Caco-2 (cell line): ENCODE measurements at regions of chr14 and their contacts with region 1.

Region 1: DNA sequence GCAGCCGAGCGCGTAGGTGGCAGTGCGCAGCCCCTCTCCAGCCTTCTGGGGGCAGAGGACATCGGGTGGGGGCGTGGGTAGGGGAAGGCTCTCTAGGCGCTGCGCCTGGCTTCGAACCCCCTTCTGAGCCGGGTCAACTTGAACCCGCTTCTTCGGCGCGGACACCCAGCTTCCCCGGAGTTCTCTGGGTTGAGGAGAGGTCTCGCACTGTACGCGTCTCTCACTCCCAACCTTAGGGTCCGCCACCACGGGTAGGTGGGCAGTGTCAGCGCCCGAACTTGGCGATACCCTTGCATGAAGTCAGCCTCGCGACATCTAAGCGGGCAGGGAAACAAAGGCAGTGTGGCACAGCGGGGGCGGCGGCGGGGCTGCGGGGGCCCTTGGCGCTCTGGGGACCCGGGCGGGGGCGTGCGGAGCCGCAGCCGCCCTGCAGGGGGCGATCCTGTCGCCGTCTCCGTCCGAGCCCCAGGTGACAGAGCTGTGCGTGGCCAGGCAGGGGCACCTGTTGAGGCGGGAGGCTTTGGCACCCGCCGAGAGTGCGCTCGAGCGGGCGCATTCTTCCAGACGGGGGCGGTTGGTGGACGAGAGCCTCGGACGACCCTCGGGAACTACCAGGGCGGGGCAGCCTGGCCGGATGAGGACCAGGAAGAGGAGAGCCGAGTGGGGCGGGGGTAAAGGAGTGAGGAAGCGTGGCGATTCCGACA is 1.1 kb downstream of the GALNT16 start:
- DNase-seq: peak; percentile 56 to 77
- H3K4me3 ChIP-seq: peak overlapping the region; percentile 81
- H3K4me3 Mint-ChIP-seq: peak overlapping the region; percentile 83
- H3K27ac Mint-ChIP-seq: peak overlapping the region; percentile 13
- H3K4me1 ChIP-seq: peaks cover 8% of the 10 kb centered on the region
- H3K4me1 Mint-ChIP-seq: peaks cover 11% of the 10 kb centered on the region
- H3K27me3 ChIP-seq: no peaks in the 10 kb centered on the region; the same call in 1 of the 2 replicates
- H3K27me3 Mint-ChIP-seq: peaks cover 3% of the 10 kb centered on the region
- CTCF ChIP-seq: peak; percentile 67 to 92

Region 2: GRCh38 chr14:69181491-69181890 is 79.5 kb before region 1 on chr14:
- CTCF ChIA-PET with region 1: no interaction called
- POLR2A ChIA-PET with region 1: interaction called, 18 read pairs
- intact Hi-C with region 1: no loop called
- DNase-seq: no peak
- H3K4me3 ChIP-seq: no peak overlapping the region
- H3K4me3 Mint-ChIP-seq: no peak overlapping the region
- H3K27ac Mint-ChIP-seq: no peak overlapping the region
- H3K4me1 ChIP-seq: no peaks in the 10 kb centered on the region
- H3K4me1 Mint-ChIP-seq: no peaks in the 10 kb centered on the region
- H3K27me3 ChIP-seq: no peaks in the 10 kb centered on the region
- H3K27me3 Mint-ChIP-seq: no peaks in the 10 kb centered on the region
- CTCF ChIP-seq: no peak

Region 3: DNA sequence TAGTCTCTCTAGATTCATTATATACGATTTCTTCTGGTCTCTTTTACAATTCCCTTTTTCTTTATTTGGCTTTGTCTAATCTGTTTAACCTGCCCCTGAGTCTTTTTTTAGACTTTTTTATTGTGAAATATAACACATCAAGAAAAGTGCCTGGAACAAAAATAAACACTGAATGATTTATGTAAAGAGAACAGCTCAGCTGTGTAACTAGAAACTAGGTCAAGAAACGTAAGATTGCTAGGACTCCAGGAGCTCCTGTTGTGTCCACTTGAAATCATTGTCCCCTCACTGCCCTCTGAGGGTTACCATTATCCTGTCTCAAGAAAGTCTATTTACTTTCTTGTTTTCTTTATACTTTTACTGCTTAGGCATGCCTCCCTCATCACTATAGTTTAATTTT is 46.6 kb before region 1 on chr14:
- CTCF ChIA-PET with region 1: no interaction called
- POLR2A ChIA-PET with region 1: no interaction called
- intact Hi-C with region 1: no loop called
- DNase-seq: no peak
- H3K4me3 ChIP-seq: no peak overlapping the region
- H3K4me3 Mint-ChIP-seq: no peak overlapping the region
- H3K27ac Mint-ChIP-seq: no peak overlapping the region
- H3K4me1 ChIP-seq: no peaks in the 10 kb centered on the region
- H3K4me1 Mint-ChIP-seq: no peaks in the 10 kb centered on the region
- H3K27me3 ChIP-seq: no peaks in the 10 kb centered on the region
- H3K27me3 Mint-ChIP-seq: no peaks in the 10 kb centered on the region
- CTCF ChIP-seq: no peak

Region 4: DNA sequence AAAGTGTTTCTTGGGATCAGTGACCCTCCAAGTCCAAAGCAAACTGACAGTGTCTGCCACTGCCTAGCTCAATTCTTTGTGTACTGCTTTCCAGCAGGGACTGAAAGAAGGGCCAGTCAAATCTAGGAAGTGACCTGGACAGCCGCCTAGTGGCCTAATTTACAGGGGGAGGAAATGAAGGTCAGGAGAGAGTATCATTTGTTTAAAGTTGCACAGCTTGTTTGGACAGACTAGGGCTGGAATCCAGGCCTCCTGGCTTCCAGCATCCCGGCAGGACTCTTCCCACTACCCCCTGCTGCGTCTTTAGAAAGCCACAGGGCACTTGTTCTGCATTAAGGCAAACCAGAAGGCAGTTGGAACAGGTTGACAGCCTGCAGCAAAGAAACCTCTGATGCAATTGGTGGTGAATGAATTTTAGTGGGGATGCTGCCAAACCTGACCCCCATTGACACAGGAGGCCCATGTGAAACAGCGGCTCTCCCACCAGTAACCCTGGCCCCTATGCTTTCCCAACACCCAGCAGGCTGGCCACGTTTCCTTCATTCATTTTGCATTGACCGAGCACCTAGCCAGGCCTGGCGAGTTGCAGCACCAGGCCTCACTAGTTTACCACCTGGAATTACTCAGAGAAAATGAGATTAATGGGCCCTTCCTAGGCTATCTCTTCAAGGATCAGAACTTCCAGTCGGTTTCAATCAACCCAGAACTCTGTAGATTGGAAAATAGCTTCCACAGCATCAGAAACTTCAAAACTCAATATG is 27.2 kb after region 1 on chr14:
- CTCF ChIA-PET with region 1: interaction called, 68 read pairs
- POLR2A ChIA-PET with region 1: no interaction called
- intact Hi-C with region 1: loop called (anchors 1 kb)
- DNase-seq: peak in 1 of 2 experiments; percentile 34
- H3K4me3 ChIP-seq: no peak overlapping the region
- H3K4me3 Mint-ChIP-seq: no peak overlapping the region
- H3K27ac Mint-ChIP-seq: no peak overlapping the region
- H3K4me1 ChIP-seq: peaks cover 4% of the 10 kb centered on the region; the same call in 1 of the 2 replicates
- H3K4me1 Mint-ChIP-seq: peaks cover 11% of the 10 kb centered on the region
- H3K27me3 ChIP-seq: no peaks in the 10 kb centered on the region
- H3K27me3 Mint-ChIP-seq: no peaks in the 10 kb centered on the region
- CTCF ChIP-seq: peak; percentile 38 to 45

Region 5: DNA sequence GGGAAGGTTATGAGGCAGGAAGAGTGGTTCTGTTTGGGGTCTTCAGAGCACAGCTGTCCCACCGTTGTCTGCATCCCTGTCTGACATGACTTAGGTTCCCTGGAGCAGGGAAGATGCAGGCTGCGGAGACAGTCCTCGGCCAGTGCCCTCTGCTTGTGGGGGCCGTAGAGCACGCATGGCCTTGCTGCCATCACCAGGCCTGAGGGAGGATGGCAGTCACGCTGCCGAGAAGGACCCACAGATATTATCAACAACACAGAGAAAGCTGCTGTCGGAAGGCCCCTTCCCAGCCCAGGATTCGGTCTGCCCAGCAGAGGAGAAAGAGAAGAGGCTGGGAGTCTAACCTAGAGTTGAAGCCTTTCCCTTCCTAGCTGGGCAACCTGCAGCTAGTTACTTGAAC is 102.0 kb after region 1 on chr14:
- CTCF ChIA-PET with region 1: interaction called, 3 read pairs
- POLR2A ChIA-PET with region 1: no interaction called
- intact Hi-C with region 1: loop called (anchors 5 kb)
- DNase-seq: peak in 1 of 2 experiments; percentile 38
- H3K4me3 ChIP-seq: no peak overlapping the region
- H3K4me3 Mint-ChIP-seq: no peak overlapping the region
- H3K27ac Mint-ChIP-seq: no peak overlapping the region
- H3K4me1 ChIP-seq: no peaks in the 10 kb centered on the region
- H3K4me1 Mint-ChIP-seq: no peaks in the 10 kb centered on the region
- H3K27me3 ChIP-seq: no peaks in the 10 kb centered on the region
- H3K27me3 Mint-ChIP-seq: no peaks in the 10 kb centered on the region
- CTCF ChIP-seq: peak in 1 of 2 experiments; percentile 58

Region 6: DNA sequence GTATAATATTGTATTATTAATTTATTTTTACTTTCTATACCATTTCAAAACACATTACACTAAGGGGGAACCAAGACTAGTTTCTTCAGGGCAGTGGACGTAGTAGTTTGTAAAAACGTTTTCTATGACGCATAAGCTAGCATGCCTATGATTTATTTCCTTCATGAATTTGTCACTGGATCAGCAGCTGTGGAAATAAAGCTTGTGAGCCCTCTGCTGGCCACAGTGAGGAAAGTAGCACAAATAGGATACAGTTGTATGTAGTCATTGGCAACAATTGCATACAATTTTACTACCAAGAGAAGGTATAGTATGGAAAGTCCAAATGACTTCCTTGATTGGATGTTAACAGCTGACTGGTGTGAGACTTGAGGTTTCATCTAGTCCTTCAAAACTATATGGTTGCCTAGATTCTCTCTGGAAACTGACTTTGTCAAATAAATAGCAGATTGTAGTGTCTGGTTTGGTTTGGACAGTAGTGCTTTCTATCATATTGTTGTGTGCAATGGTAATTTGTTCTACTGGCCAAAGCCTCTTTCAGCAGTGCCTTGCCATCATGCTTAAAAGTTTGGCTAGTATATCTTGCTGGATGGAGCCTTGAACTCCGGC is 199.2 kb after region 1 on chr14:
- CTCF ChIA-PET with region 1: no interaction called
- POLR2A ChIA-PET with region 1: no interaction called
- intact Hi-C with region 1: loop called (anchors 5 kb)
- DNase-seq: peak; percentile 49 to 66
- H3K4me3 ChIP-seq: no peak overlapping the region
- H3K4me3 Mint-ChIP-seq: no peak overlapping the region
- H3K27ac Mint-ChIP-seq: no peak overlapping the region
- H3K4me1 ChIP-seq: no peaks in the 10 kb centered on the region
- H3K4me1 Mint-ChIP-seq: no peaks in the 10 kb centered on the region
- H3K27me3 ChIP-seq: no peaks in the 10 kb centered on the region
- H3K27me3 Mint-ChIP-seq: no peaks in the 10 kb centered on the region
- CTCF ChIP-seq: peak; percentile 69 to 77